Activated B cell treated with CpG ODN at 0.5 μM for 24 hours (primary cell): ENCODE measurements at regions of chr6 and their contacts with region 1.

Region 1: DNA sequence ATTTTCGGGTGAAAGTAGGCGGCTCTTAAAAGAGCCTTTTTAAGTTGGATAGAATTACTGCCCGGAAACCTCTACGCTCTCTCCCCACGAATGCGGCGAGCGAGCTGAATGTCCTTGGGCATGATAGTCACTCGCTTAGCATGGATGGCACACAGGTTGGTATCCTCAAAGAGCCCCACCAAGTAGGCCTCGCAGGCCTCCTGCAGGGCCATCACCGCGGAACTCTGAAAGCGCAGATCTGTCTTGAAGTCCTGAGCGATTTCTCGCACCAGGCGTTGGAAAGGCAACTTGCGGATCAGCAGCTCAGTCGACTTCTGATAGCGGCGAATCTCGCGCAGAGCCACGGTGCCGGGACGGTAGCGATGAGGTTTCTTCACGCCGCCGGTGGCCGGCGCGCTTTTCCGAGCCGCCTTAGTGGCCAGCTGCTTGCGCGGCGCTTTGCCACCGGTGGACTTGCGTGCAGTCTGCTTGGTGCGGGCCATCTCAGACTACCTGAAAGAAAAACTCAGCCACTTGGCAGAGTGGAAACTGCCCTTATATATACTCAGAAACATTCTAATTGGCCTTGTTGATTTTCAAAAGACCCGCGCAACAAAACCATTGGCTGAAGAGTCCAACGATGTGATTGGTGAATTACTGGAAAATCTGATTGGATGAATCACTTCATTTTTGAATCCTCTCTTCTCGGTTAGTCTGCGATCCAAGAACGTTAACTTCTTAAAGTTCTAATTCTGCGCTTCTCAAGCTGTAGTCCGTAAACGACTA is 93.9 kb upstream of the BTN3A2 start:
- DNase-seq: peak; percentile 49
- ATAC-seq: peak; percentile 18
- H3K4me3 Mint-ChIP-seq: no peak overlapping the region
- H3K27ac Mint-ChIP-seq: no peak overlapping the region
- H3K4me1 Mint-ChIP-seq: peaks cover 24% of the 10 kb centered on the region
- H3K27me3 Mint-ChIP-seq: no peaks in the 10 kb centered on the region
- CTCF ChIP-seq: no peak

Region 2: DNA sequence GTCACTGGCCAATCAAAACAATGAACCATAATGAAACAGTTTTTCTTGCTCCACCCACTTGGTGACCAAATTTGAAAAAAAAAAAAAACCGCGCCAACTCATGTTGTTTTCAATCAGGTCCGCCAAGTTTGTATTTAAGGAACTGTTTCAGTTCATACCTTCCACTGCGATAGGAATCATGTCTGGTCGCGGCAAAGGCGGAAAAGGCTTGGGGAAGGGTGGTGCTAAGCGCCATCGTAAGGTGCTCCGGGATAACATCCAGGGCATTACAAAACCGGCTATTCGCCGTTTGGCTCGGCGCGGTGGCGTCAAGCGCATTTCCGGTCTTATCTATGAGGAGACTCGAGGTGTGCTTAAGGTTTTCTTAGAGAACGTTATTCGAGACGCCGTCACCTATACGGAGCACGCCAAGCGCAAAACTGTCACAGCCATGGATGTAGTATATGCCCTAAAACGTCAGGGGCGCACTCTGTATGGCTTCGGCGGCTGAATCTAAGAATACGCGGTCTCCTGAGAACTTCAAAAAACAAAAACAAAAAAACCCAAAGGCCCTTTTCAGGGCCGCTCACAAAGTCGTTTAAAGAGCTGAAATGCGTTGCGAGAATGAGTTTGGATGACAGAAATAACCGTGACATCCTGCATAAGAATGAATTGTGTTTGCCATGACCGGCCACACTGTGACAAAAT is 167.2 kb before region 1 on chr6:
- CTCF ChIA-PET with region 1: no interaction called
- POLR2A ChIA-PET with region 1: interaction called, 18 read pairs
- intact Hi-C with region 1: loop called (anchors 1 kb)
- DNase-seq: peak; percentile 83
- ATAC-seq: peak; percentile 85
- H3K4me3 Mint-ChIP-seq: peak overlapping the region; percentile 85
- H3K27ac Mint-ChIP-seq: peak overlapping the region; percentile 98
- H3K4me1 Mint-ChIP-seq: peaks cover 12% of the 10 kb centered on the region
- H3K27me3 Mint-ChIP-seq: peaks cover 3% of the 10 kb centered on the region
- CTCF ChIP-seq: no peak

Region 3: DNA sequence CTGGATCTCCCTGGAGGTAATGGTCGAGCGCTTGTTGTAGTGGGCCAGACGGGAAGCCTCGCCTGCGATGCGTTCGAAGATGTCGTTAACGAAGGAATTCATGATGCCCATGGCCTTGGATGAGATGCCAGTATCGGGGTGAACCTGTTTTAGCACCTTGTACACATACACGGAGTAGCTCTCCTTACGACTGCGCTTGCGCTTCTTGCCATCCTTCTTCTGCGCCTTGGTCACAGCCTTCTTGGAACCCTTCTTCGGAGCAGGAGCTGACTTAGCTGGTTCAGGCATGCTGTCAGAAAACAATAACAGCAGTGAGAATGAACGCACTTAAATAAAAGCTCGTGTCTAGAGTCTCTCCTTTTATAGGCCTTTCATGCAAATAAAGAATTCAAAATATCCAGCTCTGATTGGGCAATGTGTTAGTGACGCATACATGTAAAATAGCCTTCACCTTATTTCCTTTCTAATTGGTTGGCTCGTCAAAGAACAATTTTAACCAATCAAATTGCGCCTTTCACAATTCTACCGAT is 54.7 kb before region 1 on chr6:
- CTCF ChIA-PET with region 1: no interaction called
- POLR2A ChIA-PET with region 1: interaction called, 258 read pairs
- intact Hi-C with region 1: loop called (anchors 1 kb)
- DNase-seq: peak; percentile 62
- ATAC-seq: peak; percentile 78
- H3K4me3 Mint-ChIP-seq: no peak overlapping the region
- H3K27ac Mint-ChIP-seq: no peak overlapping the region
- H3K4me1 Mint-ChIP-seq: peaks cover 12% of the 10 kb centered on the region
- H3K27me3 Mint-ChIP-seq: no peaks in the 10 kb centered on the region
- CTCF ChIP-seq: no peak

Region 4: DNA sequence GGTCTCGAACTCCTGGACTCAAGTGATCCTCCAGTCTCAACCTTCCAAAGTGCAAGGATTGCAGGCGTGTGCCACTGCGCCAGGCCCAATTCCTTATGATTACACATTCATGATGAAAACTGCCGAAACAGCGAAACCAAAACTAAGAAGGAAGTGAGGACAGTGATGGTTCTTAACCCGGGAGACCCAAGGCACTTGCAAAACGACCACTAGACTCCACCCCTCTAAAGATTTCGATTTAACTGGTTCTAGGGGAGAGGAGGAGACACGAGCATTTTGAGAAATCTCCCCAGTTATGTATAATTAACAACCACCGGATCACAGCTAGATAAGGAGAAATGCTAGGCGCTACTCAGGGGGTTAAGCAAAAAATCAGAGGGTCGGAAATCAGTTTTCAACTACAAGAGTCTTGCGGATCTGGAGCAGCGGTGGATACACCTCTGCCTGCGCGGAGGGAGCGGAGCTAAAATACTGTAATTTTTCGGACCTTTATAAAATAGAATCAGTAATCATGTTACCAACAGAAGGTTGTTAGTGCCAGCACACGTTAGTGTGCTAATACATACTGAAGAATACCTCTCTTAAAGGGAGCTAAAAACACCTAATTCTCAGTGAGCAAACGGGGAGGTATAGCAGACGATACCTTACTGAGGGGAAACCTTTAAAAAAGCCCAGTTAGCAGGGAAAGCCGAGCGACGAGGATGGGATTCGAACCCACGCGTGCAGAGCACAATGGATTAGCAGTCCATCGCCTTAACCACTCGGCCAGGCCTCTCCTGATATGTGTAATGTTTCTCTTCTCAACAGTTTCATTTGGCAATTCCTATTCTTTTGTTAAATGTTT is 33.9 kb after region 1 on chr6:
- CTCF ChIA-PET with region 1: no interaction called
- POLR2A ChIA-PET with region 1: interaction called, 11 read pairs
- intact Hi-C with region 1: loop called (anchors 2 kb)
- DNase-seq: peak; percentile 39
- ATAC-seq: peak; percentile 87
- H3K4me3 Mint-ChIP-seq: peak overlapping the region; percentile 93
- H3K27ac Mint-ChIP-seq: peak overlapping the region; percentile 96
- H3K4me1 Mint-ChIP-seq: peaks cover 17% of the 10 kb centered on the region
- H3K27me3 Mint-ChIP-seq: no peaks in the 10 kb centered on the region
- CTCF ChIP-seq: no peak

Region 5: GRCh38 chr6:26351544-26351953 is 80.5 kb after region 1 on chr6:
- CTCF ChIA-PET with region 1: no interaction called
- POLR2A ChIA-PET with region 1: no interaction called
- intact Hi-C with region 1: no loop called
- DNase-seq: no peak
- ATAC-seq: no peak
- H3K4me3 Mint-ChIP-seq: no peak overlapping the region
- H3K27ac Mint-ChIP-seq: no peak overlapping the region
- H3K4me1 Mint-ChIP-seq: no peaks in the 10 kb centered on the region
- H3K27me3 Mint-ChIP-seq: peaks cover 25% of the 10 kb centered on the region
- CTCF ChIP-seq: no peak

Region 6: GRCh38 chr6:26537846-26538571 is 266.9 kb after region 1 on chr6 and contains the start of gene HMGN4:
- CTCF ChIA-PET with region 1: interaction called, 3 read pairs
- POLR2A ChIA-PET with region 1: interaction called, 37 read pairs
- intact Hi-C with region 1: no loop called
- DNase-seq: peak; percentile 73
- ATAC-seq: peak; percentile 67
- H3K4me3 Mint-ChIP-seq: peak within 1 kb of the TSS; percentile 98
- H3K27ac Mint-ChIP-seq: peak within 1 kb of the TSS; percentile 97
- H3K4me1 Mint-ChIP-seq: peaks cover 65% of the 10 kb centered on the region
- H3K27me3 Mint-ChIP-seq: peaks cover 7% of the 10 kb centered on the region
- CTCF ChIP-seq: no peak
- total RNA-seq, gene HMGN4: 74.5 and 82.2 TPM in 2 replicates

Region 7: DNA sequence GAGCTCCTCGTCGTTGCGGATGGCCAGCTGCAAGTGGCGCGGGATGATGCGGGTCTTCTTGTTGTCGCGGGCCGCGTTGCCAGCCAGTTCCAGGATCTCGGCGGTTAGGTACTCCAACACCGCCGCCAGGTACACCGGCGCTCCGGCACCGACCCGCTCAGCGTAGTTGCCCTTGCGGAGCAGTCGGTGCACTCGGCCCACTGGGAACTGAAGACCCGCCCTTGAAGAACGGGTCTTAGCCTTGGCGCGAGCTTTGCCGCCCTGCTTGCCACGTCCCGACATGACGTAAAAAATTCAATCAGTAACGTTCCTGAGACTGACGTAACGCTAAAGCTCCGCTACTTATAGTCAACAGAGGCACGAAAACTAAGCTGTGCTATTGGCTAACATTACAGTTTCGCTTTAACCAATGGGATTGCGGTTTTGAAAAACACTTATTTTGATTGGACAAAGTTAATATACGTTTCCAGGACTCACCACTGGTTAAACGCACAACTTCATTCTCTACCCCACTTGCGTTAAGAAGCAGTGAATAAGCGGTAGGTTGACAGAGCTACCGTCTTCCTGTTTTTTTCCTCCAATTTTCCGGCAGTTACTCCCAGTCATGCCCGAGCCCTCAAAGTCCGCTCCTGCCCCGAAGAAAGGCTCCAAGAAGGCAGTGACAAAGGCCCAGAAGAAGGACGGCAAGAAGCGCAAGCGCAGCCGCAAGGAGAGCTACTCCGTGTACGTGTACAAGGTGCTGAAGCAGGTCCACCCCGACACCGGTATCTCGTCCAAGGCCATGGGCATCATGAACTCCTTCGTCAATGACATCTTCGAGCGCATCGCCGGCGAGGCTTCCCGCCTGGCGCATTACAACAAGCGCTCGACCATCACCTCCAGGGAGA is 1567.2 kb after region 1 on chr6:
- CTCF ChIA-PET with region 1: no interaction called
- POLR2A ChIA-PET with region 1: interaction called, 39 read pairs
- intact Hi-C with region 1: no loop called
- DNase-seq: peak; percentile 73
- ATAC-seq: peak; percentile 76
- H3K4me3 Mint-ChIP-seq: no peak overlapping the region
- H3K27ac Mint-ChIP-seq: no peak overlapping the region
- H3K4me1 Mint-ChIP-seq: peaks cover 18% of the 10 kb centered on the region
- H3K27me3 Mint-ChIP-seq: no peaks in the 10 kb centered on the region
- CTCF ChIP-seq: no peak